CD4-positive, alpha-beta memory T cell (primary cell): ENCODE measurements at regions of chr10 and their contacts with region 1.

Region 1: DNA sequence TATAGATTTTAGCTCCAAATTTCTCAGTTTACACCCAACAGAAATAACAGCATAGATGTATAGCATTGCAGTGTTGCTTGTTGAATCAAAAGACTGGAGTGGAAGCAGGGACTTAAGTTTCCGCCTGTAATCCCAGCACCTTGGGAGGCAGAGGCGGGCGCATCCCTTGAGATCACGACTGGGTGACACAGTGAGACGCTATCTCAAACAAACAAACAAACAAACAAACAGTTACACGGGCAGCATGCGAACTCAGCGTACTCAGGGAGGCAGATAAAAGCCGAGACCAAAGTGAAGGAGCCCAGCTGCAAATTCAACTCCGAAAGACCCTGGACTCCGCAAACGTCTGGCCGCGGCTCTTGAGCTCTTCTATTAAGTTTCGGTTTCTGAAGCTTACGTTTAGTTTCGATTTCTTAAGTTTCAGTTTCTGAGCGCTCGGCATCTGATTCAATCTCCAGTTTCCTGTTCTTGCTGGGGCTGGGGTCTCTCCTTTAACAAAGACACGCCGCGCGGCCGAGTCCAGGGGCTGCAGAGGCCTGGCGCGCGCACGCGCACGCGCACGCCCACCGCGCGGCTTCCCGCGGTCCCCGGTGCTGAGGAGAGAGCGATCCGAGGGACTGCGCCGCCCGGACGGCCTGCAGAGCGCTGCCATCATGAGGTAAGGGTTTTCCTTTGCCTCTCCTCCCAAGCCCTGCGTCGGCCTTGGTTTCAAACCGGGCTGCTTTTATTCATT is at the start of gene IFIT5:
- DNase-seq: peak; percentile 78 to 83 (median 81)
- H3K4me3 ChIP-seq: peak within 1 kb of the TSS; percentile 94
- H3K4me3 Mint-ChIP-seq: peak within 1 kb of the TSS; percentile 93 to 96 (median 94)
- H3K27ac ChIP-seq: peak within 1 kb of the TSS; percentile 91
- H3K27ac Mint-ChIP-seq: peak within 1 kb of the TSS; percentile 98 to 99 (median 98)
- H3K4me1 ChIP-seq: peaks cover 58% of the 10 kb centered on the region
- H3K4me1 Mint-ChIP-seq: peaks cover 43 to 81% (median 55%) of the 10 kb centered on the region in 4 donors
- H3K27me3 ChIP-seq: no peaks in the 10 kb centered on the region
- H3K27me3 Mint-ChIP-seq: no peaks in the 10 kb centered on the region
- total RNA-seq, gene IFIT5: 24.6 to 25.6 TPM

Region 2: DNA sequence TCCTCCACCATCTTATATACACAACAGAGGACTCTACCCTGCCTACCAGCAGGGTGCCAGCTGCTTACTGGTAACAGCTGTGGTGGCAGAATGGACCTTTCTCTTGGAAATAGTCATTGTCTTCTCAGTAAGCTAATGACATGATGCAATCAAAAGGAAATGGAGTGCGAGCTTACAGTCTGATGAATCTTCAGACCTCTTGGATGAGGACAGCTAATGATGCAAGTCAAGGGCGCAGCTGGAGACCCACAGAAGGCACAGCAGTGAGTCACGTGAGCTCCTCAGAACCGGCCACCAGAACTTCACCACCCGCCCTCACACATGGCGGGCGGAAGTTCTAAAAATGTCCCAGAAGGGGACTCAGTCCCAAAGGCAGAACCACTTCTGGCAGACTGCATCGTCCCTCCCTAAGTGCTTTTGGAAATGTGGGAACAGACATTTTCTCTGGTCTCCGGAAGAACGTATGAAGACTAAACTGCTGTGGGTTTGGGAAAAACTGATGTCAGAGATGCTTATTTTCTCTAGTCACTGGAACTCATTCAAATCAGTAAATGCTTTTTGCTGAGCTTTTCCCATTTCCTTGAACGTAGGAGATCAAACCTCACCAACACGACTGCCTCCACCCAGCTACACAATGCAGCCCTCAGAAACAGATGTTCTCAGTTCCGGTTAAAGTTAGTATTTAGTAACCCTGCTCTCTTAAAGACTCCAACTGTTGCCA is 327.4 kb before region 1 on chr10:
- CTCF ChIA-PET with region 1: no interaction called
- POLR2A ChIA-PET with region 1: no interaction called
- intact Hi-C with region 1: loop called (anchors 10 kb)
- DNase-seq: peak in 1 of 5 donors; percentile 8
- H3K4me3 ChIP-seq: no peak overlapping the region
- H3K4me3 Mint-ChIP-seq: peak overlapping the region in 2 of 8 donors; percentile 22 to 47
- H3K27ac ChIP-seq: no peak overlapping the region
- H3K27ac Mint-ChIP-seq: peak overlapping the region in 2 of 7 donors; percentile 24 to 72
- H3K4me1 ChIP-seq: peaks cover 45% of the 10 kb centered on the region
- H3K4me1 Mint-ChIP-seq: peaks cover 0 to 9% (median 6%) of the 10 kb centered on the region in 4 donors
- H3K27me3 ChIP-seq: no peaks in the 10 kb centered on the region
- H3K27me3 Mint-ChIP-seq: no peaks in the 10 kb centered on the region

Region 3: DNA sequence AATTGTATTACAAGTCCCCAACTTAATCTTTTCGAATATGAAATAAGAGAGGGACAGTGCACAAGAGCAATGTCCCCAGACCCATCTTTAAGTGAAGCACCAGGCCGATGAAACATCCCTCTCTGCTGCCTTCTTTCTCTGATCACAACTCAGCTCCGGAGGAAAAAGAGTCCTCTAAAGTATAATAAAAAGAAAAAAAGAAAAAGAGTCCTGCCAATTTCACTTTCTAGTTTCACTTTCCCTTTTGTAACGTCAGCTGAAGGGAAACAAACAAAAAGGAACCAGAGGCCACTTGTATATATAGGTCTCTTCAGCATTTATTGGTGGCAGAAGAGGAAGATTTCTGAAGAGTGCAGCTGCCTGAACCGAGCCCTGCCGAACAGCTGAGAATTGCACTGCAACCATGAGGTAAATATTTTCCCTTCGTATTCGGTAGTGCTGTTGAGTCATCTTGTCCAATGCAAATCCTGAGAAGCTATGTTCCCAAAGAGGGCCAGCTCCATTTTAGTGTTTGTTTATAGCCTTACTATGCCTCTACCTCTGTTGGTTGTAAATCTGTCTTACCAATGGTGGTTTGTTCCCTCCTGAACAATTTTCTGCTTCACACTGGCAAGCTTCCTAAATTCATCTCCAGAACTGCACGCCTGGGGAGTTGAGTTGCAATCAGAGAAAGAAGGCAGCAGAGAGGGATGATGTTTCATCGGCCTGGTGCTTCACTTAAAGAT is 112.4 kb before region 1 on chr10 and contains the start of gene IFIT2:
- CTCF ChIA-PET with region 1: interaction called, 7 read pairs
- POLR2A ChIA-PET with region 1: interaction called, 53 read pairs
- intact Hi-C with region 1: loop called (anchors 1 kb)
- DNase-seq: peak; percentile 52 to 70 (median 62)
- H3K4me3 ChIP-seq: peak within 1 kb of the TSS; percentile 63 to 69
- H3K4me3 Mint-ChIP-seq: peak within 1 kb of the TSS; percentile 90 to 98 (median 94)
- H3K27ac ChIP-seq: peak within 1 kb of the TSS; percentile 75
- H3K27ac Mint-ChIP-seq: peak within 1 kb of the TSS; percentile 96 to 99 (median 98)
- H3K4me1 ChIP-seq: peaks cover 30% of the 10 kb centered on the region
- H3K4me1 Mint-ChIP-seq: peaks cover 22 to 40% (median 28%) of the 10 kb centered on the region in 4 donors
- H3K27me3 ChIP-seq: no peaks in the 10 kb centered on the region
- H3K27me3 Mint-ChIP-seq: no peaks in the 10 kb centered on the region
- total RNA-seq, gene IFIT2: 10.4 to 10.7 TPM

Region 4: DNA sequence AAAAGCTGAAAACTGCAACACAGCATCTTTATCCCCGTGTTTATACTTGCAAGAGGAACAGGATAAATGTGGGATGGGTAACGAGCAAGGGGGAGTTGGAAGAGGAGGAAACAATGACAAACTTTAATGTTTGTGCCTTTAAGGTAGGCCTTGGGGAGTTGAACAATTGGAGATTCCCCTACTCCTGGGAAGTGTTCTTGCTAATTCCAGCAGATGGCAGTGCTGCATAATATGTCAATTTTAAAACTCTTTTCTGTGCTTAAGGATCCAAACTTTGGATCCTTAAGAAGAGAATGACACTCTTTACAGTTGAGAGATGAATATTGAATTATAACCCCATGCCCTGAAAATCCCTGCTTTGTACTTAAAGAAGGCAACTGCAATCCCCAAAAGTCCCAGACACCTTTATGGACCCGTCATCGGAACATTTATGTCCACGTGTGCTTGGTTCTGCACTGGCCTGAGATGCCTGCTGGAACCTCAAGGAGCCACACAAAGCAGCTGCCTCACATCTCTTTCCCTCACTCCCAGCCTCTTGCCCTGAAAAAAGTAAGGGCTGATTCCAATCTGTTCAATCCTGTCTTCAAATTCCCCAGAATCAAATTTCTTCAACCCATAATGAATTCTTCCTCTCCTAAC is 12.0 kb after region 1 on chr10:
- CTCF ChIA-PET with region 1: interaction called, 3 read pairs
- POLR2A ChIA-PET with region 1: interaction called, 3 read pairs
- intact Hi-C with region 1: loop called (anchors 1 kb)
- DNase-seq: peak in 3 of 5 donors; percentile 21 to 35 (median 28)
- H3K4me3 ChIP-seq: no peak overlapping the region
- H3K4me3 Mint-ChIP-seq: no peak overlapping the region
- H3K27ac ChIP-seq: no peak overlapping the region
- H3K27ac Mint-ChIP-seq: no peak overlapping the region
- H3K4me1 ChIP-seq: no peaks in the 10 kb centered on the region
- H3K4me1 Mint-ChIP-seq: peaks cover 0 to 2% (median 1%) of the 10 kb centered on the region in 4 donors
- H3K27me3 ChIP-seq: no peaks in the 10 kb centered on the region
- H3K27me3 Mint-ChIP-seq: peaks cover 0 to 3% of the 10 kb centered on the region in 2 donors

Region 5: GRCh38 chr10:89701238-89702120 is 287.2 kb after region 1 on chr10 and contains the start of gene KIF20B:
- CTCF ChIA-PET with region 1: no interaction called
- POLR2A ChIA-PET with region 1: interaction called, 8 read pairs
- intact Hi-C with region 1: loop called (anchors 2 kb)
- DNase-seq: peak; percentile 95 to 97 (median 96)
- H3K4me3 ChIP-seq: peak within 1 kb of the TSS; percentile 74 to 99
- H3K4me3 Mint-ChIP-seq: peak within 1 kb of the TSS; percentile 97 to 99 (median 99)
- H3K27ac ChIP-seq: peak within 1 kb of the TSS; percentile 75
- H3K27ac Mint-ChIP-seq: peak within 1 kb of the TSS; percentile 97 to 99 (median 99)
- H3K4me1 ChIP-seq: peaks cover 35% of the 10 kb centered on the region
- H3K4me1 Mint-ChIP-seq: peaks cover 21 to 53% (median 33%) of the 10 kb centered on the region in 4 donors
- H3K27me3 ChIP-seq: no peaks in the 10 kb centered on the region
- H3K27me3 Mint-ChIP-seq: no peaks in the 10 kb centered on the region
- total RNA-seq, gene KIF20B: 20.7 to 21.4 TPM